ENCODE measurements at regions of chr12 and their contacts with region 1.

Region 1: DNA sequence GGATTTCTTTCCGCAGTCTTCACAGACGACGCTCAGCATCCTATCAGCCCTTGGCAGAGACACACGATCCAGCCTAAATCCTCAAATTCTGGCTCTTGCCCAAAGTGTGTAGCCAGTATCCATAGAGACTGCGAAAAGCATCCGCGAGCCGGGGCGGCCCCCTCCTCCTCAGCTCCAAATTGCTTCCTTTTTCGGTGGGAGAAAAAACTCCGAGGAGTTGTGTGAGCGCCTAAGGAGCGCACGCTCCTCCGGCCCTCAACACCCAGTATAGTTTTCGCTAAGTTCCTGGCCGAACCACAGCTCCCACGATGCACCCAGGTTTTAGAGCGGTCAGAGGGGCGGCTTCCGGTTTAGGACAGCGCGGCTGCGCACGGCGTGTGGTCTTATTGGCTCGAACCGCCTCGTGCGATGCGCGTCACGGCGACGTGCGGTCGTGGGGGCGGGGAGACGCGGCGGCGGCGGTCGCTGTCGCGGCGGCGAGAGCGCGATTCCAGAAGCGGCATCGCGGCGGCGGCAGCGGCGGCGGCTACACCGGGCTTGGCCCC is at the start of gene ADIPOR2:
- DNase-seq: peak; percentile 87 to 99 (median 92)
- ATAC-seq: peak; percentile 97
- H3K4me3 ChIP-seq: peak within 1 kb of the TSS; percentile 86
- H3K4me3 Mint-ChIP-seq: peak within 1 kb of the TSS; percentile 97
- H3K27ac ChIP-seq: peak within 1 kb of the TSS; percentile 76 to 83
- H3K27ac Mint-ChIP-seq: peak within 1 kb of the TSS; percentile 99
- H3K4me1 ChIP-seq: peaks cover 17% of the 10 kb centered on the region
- H3K4me1 Mint-ChIP-seq: peaks cover 48% of the 10 kb centered on the region
- H3K27me3 ChIP-seq: no peaks in the 10 kb centered on the region
- H3K27me3 Mint-ChIP-seq: peaks cover 5% of the 10 kb centered on the region
- CTCF ChIP-seq: no peak
- total RNA-seq, gene ADIPOR2: 12.5 to 12.6 TPM

Region 2: DNA sequence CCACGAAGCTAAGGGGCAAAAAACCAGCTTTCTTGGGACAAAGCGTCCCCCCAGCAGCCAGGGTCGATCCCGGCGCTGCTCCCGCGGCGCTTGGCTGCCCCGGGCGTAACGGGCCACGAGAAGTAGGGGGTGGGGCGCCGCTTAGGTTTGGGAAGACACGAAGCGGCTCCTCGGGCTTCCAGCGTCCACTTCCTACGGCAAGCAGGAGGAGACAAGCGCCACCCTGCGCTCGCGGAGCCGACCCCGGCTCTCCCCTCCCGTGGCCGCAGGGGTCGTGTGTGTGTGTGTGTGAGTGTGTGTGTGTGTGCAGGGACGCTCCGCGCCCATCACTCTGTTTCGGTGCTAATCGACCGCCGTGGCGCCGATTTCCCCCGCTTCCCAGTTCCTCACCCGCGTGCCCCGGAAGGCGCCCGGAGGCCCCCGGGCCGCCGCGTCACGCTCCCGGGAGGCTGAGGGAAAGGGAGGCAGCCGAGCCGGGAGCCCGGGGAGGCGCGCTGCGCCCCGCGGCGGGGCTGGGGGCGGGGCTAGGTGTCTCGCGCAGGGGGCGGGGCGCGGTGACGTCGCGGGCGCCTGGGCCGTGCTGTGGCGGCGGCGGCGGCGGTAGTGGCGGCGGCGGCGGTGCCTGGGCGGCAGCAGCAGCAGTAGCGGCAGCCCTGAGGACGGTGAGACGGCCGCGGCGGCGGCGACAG is 699.8 kb before region 1 on chr12 and contains the start of gene ERC1:
- CTCF ChIA-PET with region 1: no interaction called
- POLR2A ChIA-PET with region 1: no interaction called
- intact Hi-C with region 1: loop called in 1 of 2 experiments (anchors 5 kb)
- DNase-seq: peak; percentile 68 to 94 (median 84)
- ATAC-seq: peak; percentile 81
- H3K4me3 ChIP-seq: peak within 1 kb of the TSS; percentile 89
- H3K4me3 Mint-ChIP-seq: peak within 1 kb of the TSS; percentile 99
- H3K27ac ChIP-seq: peak within 1 kb of the TSS; percentile 69 to 74
- H3K27ac Mint-ChIP-seq: peak within 1 kb of the TSS; percentile 96
- H3K4me1 ChIP-seq: peaks cover 23% of the 10 kb centered on the region
- H3K4me1 Mint-ChIP-seq: peaks cover 47% of the 10 kb centered on the region
- H3K27me3 ChIP-seq: no peaks in the 10 kb centered on the region
- H3K27me3 Mint-ChIP-seq: no peaks in the 10 kb centered on the region
- CTCF ChIP-seq: no peak
- total RNA-seq, gene ERC1: 40.1 to 49.6 TPM

Region 3: DNA sequence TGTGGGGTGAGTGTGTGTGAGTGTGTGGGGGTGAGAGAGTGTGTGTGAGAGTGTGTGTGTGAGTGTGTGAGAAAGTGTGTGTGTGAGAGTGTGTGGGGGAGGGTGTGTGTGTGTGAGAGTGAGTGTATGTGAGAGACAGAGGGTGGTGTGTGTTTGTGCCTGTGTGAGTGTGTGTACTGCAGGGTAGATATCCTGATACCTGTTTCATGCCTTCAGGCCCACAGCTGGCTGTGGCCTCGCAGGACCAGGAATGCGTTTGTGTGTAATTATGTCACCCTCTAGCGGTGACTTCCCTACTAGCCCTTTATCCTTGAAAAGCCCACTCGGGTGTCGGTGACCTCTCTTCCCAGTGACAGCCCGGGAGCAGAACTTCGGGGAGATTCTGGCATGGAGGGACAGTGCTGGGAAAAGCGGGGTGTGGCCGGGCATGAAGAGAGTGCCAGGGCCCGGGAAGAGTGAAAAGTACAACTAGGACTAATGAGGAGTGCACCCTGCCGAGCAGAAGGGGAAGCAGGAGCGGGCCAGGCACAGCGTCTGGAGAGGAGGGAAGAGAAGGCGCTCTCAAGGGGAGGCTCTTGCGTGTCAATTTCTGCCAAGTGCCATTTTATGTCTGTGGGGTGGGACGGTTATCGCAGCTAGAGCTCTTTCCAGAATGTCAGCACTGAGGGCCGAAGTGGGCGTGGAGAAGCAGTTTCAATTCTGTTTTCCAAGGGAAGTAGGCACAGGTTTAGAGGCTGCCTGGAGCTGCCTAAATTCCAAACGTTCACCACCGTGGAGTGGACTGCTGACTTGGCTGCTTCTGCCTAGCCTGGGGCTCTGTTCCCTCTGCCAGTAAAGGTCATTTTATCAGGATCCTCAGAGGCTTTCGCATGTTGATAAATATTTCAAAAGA is 85.3 kb before region 1 on chr12:
- CTCF ChIA-PET with region 1: no interaction called
- POLR2A ChIA-PET with region 1: interaction called, 8 read pairs
- intact Hi-C with region 1: loop called in 1 of 2 experiments (anchors 5 kb)
- DNase-seq: peak; percentile 37 to 87 (median 50)
- ATAC-seq: peak; percentile 69
- H3K4me3 ChIP-seq: peak overlapping the region; percentile 51
- H3K4me3 Mint-ChIP-seq: peak overlapping the region; percentile 79
- H3K27ac ChIP-seq: no peak overlapping the region
- H3K27ac Mint-ChIP-seq: peak overlapping the region; percentile 10
- H3K4me1 ChIP-seq: peaks cover 26% of the 10 kb centered on the region
- H3K4me1 Mint-ChIP-seq: peaks cover 39% of the 10 kb centered on the region
- H3K27me3 ChIP-seq: no peaks in the 10 kb centered on the region
- H3K27me3 Mint-ChIP-seq: no peaks in the 10 kb centered on the region
- CTCF ChIP-seq: peak; percentile 77

Region 4: GRCh38 chr12:1650260-1650977 is 40.2 kb before region 1 on chr12:
- CTCF ChIA-PET with region 1: interaction called, 4 read pairs
- POLR2A ChIA-PET with region 1: interaction called, 4 read pairs
- intact Hi-C with region 1: loop called in 1 of 2 experiments (anchors 5 kb)
- DNase-seq: no peak
- ATAC-seq: no peak
- H3K4me3 ChIP-seq: no peak overlapping the region
- H3K4me3 Mint-ChIP-seq: no peak overlapping the region
- H3K27ac ChIP-seq: no peak overlapping the region
- H3K27ac Mint-ChIP-seq: no peak overlapping the region
- H3K4me1 ChIP-seq: peaks cover 7% of the 10 kb centered on the region
- H3K4me1 Mint-ChIP-seq: no peaks in the 10 kb centered on the region
- H3K27me3 ChIP-seq: no peaks in the 10 kb centered on the region
- H3K27me3 Mint-ChIP-seq: peaks cover 4% of the 10 kb centered on the region
- CTCF ChIP-seq: no peak

Region 5: GRCh38 chr12:1661553-1662335 is 28.9 kb before region 1 on chr12:
- CTCF ChIA-PET with region 1: interaction called, 3 read pairs
- POLR2A ChIA-PET with region 1: interaction called, 34 read pairs
- intact Hi-C with region 1: loop called (anchors 2 to 5 kb)
- DNase-seq: peak; percentile 54 to 96 (median 75)
- ATAC-seq: peak; percentile 77
- H3K4me3 ChIP-seq: peak overlapping the region; percentile 56
- H3K4me3 Mint-ChIP-seq: peak overlapping the region; percentile 79
- H3K27ac ChIP-seq: peak overlapping the region in 1 of 2 donors; percentile 29
- H3K27ac Mint-ChIP-seq: peak overlapping the region; percentile 73
- H3K4me1 ChIP-seq: peaks cover 21% of the 10 kb centered on the region
- H3K4me1 Mint-ChIP-seq: peaks cover 42% of the 10 kb centered on the region
- H3K27me3 ChIP-seq: no peaks in the 10 kb centered on the region
- H3K27me3 Mint-ChIP-seq: no peaks in the 10 kb centered on the region
- CTCF ChIP-seq: no peak

Region 6: GRCh38 chr12:1670815-1671268 is 19.8 kb before region 1 on chr12:
- CTCF ChIA-PET with region 1: no interaction called
- POLR2A ChIA-PET with region 1: interaction called, 4 read pairs
- intact Hi-C with region 1: loop called in 1 of 2 experiments (anchors 2 kb)
- DNase-seq: no peak
- ATAC-seq: no peak
- H3K4me3 ChIP-seq: no peak overlapping the region
- H3K4me3 Mint-ChIP-seq: no peak overlapping the region
- H3K27ac ChIP-seq: no peak overlapping the region
- H3K27ac Mint-ChIP-seq: no peak overlapping the region
- H3K4me1 ChIP-seq: peaks cover 31% of the 10 kb centered on the region
- H3K4me1 Mint-ChIP-seq: peaks cover 32% of the 10 kb centered on the region
- H3K27me3 ChIP-seq: no peaks in the 10 kb centered on the region
- H3K27me3 Mint-ChIP-seq: no peaks in the 10 kb centered on the region
- CTCF ChIP-seq: no peak

Region 7: GRCh38 chr12:1949771-1950470 is 259.3 kb after region 1 on chr12:
- CTCF ChIA-PET with region 1: no interaction called
- POLR2A ChIA-PET with region 1: no interaction called
- intact Hi-C with region 1: no loop called
- DNase-seq: no peak
- ATAC-seq: no peak
- H3K4me3 ChIP-seq: no peak overlapping the region
- H3K4me3 Mint-ChIP-seq: no peak overlapping the region
- H3K27ac ChIP-seq: no peak overlapping the region
- H3K27ac Mint-ChIP-seq: peak overlapping the region; percentile 71
- H3K4me1 ChIP-seq: no peaks in the 10 kb centered on the region
- H3K4me1 Mint-ChIP-seq: no peaks in the 10 kb centered on the region
- H3K27me3 ChIP-seq: no peaks in the 10 kb centered on the region
- H3K27me3 Mint-ChIP-seq: no peaks in the 10 kb centered on the region
- CTCF ChIP-seq: no peak

Region 8: DNA sequence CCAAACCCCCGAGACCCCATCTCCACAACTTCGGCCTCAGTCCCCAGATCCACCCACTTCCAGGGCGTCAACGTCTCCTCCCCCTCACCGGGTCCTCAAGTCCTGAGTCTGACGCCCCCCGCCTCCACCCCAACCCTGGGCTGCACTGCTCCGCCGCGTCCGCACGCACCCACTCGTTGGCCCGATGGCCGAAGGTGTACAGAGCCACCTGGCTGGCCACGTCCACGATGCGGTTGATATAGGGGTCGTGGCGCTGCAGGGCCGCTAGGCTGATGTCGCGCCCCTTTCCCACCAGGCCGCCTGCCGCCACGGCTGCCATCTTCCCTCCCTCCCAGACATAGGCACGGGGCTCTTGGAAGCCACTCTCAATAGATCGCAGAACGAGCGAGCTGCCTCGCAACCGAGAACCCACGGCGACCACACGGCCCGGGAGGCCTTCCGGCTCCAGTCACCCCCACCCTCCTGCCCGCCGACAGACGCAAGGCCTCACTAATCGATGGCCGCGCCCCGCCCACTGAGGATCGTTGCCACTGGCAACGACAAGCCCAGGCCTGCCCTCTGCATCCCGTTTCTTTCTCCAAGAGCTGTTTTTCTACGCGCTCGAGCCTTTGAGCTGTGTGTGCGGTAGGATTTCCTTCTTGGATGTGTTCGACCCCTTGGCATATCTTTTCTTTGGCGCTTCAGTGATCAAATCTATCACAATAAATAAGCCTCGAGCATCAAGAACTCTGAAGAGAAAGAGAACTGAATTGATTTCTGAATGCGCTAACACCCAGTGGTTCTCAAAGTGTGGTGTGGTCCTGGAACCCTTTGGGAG is 313.7 kb after region 1 on chr12 and contains the start of gene DCP1B:
- CTCF ChIA-PET with region 1: no interaction called
- POLR2A ChIA-PET with region 1: no interaction called
- intact Hi-C with region 1: loop called in 1 of 2 experiments (anchors 5 kb)
- DNase-seq: peak; percentile 84 to 98 (median 90)
- ATAC-seq: peak; percentile 98
- H3K4me3 ChIP-seq: peak within 1 kb of the TSS; percentile 97
- H3K4me3 Mint-ChIP-seq: peak within 1 kb of the TSS; percentile 97
- H3K27ac ChIP-seq: peak within 1 kb of the TSS; percentile 83 to 91
- H3K27ac Mint-ChIP-seq: peak within 1 kb of the TSS; percentile 95
- H3K4me1 ChIP-seq: peaks cover 19% of the 10 kb centered on the region
- H3K4me1 Mint-ChIP-seq: peaks cover 34% of the 10 kb centered on the region
- H3K27me3 ChIP-seq: no peaks in the 10 kb centered on the region
- H3K27me3 Mint-ChIP-seq: no peaks in the 10 kb centered on the region
- CTCF ChIP-seq: no peak
- total RNA-seq, gene DCP1B: 4.3 to 4.6 TPM

Measured in CD4-positive, alpha-beta T cell (primary cell).